Activated CD4-positive, alpha-beta memory T cell treated with anti-CD3 and anti-CD28 coated beads for 36 hours (primary cell): ENCODE measurements at regions of chr9 and their contacts with region 1.

Region 1: DNA sequence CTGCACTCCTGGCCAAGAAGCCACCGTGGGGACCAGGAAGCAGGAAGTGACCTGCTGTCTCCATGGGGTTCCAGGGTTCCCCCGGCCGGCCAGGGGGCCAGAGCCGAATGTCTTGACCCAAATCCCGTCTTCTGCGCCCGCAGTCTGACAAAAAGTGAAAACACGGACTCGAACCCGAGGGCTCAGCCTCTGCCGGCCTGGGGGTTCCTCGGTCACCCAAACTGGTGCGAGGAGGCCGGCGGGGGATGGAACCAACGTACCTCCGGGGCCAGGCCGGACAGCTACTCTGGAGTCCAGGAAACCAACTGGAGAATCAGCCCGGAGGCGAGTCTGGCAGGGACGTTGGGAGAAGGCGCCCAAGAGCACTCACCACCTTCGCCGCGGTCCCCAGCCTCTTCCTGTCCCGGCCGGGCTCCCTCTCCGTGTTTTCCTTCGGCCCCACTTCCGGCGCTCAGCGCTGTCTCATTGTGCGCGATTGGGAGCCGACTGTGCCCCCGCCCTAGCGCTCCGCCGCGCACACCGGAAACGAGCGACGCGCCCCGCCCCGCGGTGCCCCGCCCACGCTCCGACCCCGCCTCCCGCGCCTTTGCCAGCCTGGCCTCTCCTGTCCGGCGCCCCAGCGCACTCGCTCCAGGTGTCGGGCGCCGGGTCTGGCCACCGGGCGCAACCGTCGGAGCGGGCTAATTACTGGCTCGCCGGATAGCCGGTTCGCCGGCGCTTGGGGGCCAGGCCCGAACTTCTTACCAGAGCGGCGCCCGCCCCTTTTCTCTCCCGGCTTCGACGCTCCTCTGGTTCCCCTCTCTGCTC is at the start of gene TUT7:
- DNase-seq: peak; percentile 97
- H3K4me3 Mint-ChIP-seq: peak within 1 kb of the TSS; percentile 98
- H3K27ac Mint-ChIP-seq: peak within 1 kb of the TSS; percentile 100
- H3K4me1 Mint-ChIP-seq: peaks cover 34% of the 10 kb centered on the region
- H3K27me3 Mint-ChIP-seq: no peaks in the 10 kb centered on the region
- total RNA-seq, gene TUT7: 50.7 to 56.8 TPM

Region 2: DNA sequence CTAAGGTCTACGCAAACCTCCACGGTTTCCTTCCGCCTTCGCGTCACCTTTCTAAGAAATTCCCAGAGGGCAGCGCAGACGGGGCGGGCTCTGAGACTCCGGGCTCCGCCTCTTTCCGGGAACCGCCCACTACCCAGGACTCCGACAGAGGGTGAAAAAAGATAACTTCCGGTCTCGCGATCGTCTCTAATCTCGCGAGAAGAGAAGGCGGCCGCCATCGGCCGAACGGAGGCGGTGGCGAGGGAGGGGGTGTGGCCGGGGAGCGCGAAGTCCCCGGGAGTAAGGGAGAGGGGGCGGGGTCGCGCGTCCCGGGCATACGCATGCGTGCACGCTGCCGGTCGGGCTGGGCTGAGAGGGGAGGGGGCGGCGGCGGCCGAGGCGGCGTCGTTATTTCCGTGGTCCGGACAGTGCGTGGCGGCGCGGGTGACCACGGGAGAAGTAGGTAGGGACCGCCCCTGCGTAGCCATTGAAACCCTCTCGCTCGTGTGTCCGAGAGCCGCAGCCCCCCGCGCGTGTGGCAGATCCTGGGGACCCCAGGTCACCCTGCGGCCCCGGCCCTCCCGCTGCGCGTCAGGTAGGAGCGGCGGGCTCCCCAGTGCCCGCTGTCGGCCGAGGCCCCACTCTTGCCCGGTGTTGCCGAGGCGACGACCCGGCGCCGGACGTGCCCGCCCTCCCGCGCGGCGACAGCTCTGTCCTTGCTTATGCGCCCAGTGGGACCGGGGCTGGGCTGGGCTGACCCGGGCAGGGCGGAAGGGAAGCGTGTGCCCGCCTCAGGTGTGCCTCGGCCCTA is 413.2 kb before region 1 on chr9 and contains the start of gene NAA35:
- CTCF ChIA-PET with region 1: no interaction called
- POLR2A ChIA-PET with region 1: interaction called, 3 read pairs
- intact Hi-C with region 1: loop called (anchors 1 kb)
- DNase-seq: peak; percentile 99
- H3K4me3 Mint-ChIP-seq: no peak within 1 kb of the TSS
- H3K27ac Mint-ChIP-seq: peak within 1 kb of the TSS; percentile 96
- H3K4me1 Mint-ChIP-seq: peaks cover 15% of the 10 kb centered on the region
- H3K27me3 Mint-ChIP-seq: no peaks in the 10 kb centered on the region
- total RNA-seq, gene NAA35: 23.0 to 24.3 TPM

Region 3: GRCh38 chr9:86282077-86282978 is 71.9 kb before region 1 on chr9 and contains the start of gene ISCA1:
- CTCF ChIA-PET with region 1: no interaction called
- POLR2A ChIA-PET with region 1: interaction called, 7 read pairs
- intact Hi-C with region 1: loop called (anchors 1 kb)
- DNase-seq: peak; percentile 97
- H3K4me3 Mint-ChIP-seq: peak within 1 kb of the TSS; percentile 92
- H3K27ac Mint-ChIP-seq: peak within 1 kb of the TSS; percentile 96
- H3K4me1 Mint-ChIP-seq: peaks cover 44% of the 10 kb centered on the region
- H3K27me3 Mint-ChIP-seq: no peaks in the 10 kb centered on the region
- total RNA-seq, gene ISCA1: 21.4 to 22.1 TPM

Region 4: DNA sequence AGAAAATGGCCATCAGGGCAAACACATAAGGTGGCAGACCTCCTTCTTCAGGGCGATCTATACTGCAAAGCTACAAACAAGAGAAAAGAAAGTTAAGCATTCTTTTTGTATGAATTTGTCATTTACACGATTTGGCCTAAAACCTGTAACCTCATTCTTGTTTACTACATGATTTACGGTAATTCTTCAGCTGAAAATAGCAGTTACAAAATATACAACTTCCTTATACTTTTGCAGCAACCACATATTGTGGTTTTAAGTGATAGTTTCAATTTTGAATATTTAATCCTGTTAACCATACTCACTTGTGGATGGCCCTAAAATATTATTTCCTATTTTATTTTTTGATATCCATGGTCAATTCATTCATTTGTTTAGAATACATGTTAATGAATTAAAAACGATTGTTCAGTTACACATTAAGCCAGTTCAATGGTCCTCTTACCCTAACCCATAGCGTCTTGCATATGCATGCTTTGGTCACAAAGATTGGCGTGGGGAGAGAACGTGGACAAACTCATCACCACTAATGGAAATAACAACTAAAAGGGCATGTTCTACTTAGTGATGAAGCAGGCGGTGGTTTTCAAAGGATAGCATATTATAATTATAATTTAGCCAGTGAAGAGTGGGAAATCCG is 16.6 kb before region 1 on chr9:
- CTCF ChIA-PET with region 1: interaction called, 3 read pairs
- POLR2A ChIA-PET with region 1: interaction called, 14 read pairs
- intact Hi-C with region 1: loop called (anchors 1 kb)
- DNase-seq: no peak
- H3K4me3 Mint-ChIP-seq: peak overlapping the region; percentile 36
- H3K27ac Mint-ChIP-seq: no peak overlapping the region
- H3K4me1 Mint-ChIP-seq: peaks cover 49% of the 10 kb centered on the region
- H3K27me3 Mint-ChIP-seq: no peaks in the 10 kb centered on the region

Region 5: GRCh38 chr9:86667307-86667706 is 313.1 kb after region 1 on chr9:
- CTCF ChIA-PET with region 1: no interaction called
- POLR2A ChIA-PET with region 1: no interaction called
- intact Hi-C with region 1: loop called (anchors 5 kb)
- DNase-seq: no peak
- H3K4me3 Mint-ChIP-seq: no peak overlapping the region
- H3K27ac Mint-ChIP-seq: no peak overlapping the region
- H3K4me1 Mint-ChIP-seq: no peaks in the 10 kb centered on the region
- H3K27me3 Mint-ChIP-seq: peaks cover 12% of the 10 kb centered on the region

Region 6: GRCh38 chr9:87792831-87793288 is 1438.6 kb after region 1 on chr9:
- CTCF ChIA-PET with region 1: no interaction called
- POLR2A ChIA-PET with region 1: no interaction called
- intact Hi-C with region 1: loop called (anchors 10 kb)
- DNase-seq: peak; percentile 83
- H3K4me3 Mint-ChIP-seq: peak overlapping the region; percentile 4
- H3K27ac Mint-ChIP-seq: peak overlapping the region; percentile 75
- H3K4me1 Mint-ChIP-seq: peaks cover 46% of the 10 kb centered on the region
- H3K27me3 Mint-ChIP-seq: no peaks in the 10 kb centered on the region